AG04450 (cell line): ENCODE measurements at regions of chr6 and their contacts with region 1.

Region 1: GRCh38 chr6:83067448-83068413 is at the start of gene DOP1A:
- DNase-seq: peak; percentile 81
- H3K4me3 ChIP-seq: peak within 1 kb of the TSS; percentile 85
- H3K27ac ChIP-seq: no peak within 1 kb of the TSS
- H3K27me3 ChIP-seq: no peaks in the 10 kb centered on the region
- CTCF ChIP-seq: peak; percentile 99
- polyA plus RNA-seq, gene DOP1A: 11.3 and 14.6 TPM in 2 replicates

Region 2: GRCh38 chr6:82260997-82261686 is 806.6 kb before region 1 on chr6:
- CTCF ChIA-PET with region 1: interaction called, 93 read pairs
- POLR2A ChIA-PET with region 1: no interaction called
- DNase-seq: no peak
- H3K4me3 ChIP-seq: no peak overlapping the region
- H3K27ac ChIP-seq: no peak overlapping the region
- H3K27me3 ChIP-seq: no peaks in the 10 kb centered on the region
- CTCF ChIP-seq: no peak

Region 3: GRCh38 chr6:83086751-83087150 is 19.0 kb after region 1 on chr6:
- CTCF ChIA-PET with region 1: interaction called, 52 read pairs
- POLR2A ChIA-PET with region 1: no interaction called
- DNase-seq: no peak
- H3K4me3 ChIP-seq: no peak overlapping the region
- H3K27ac ChIP-seq: no peak overlapping the region
- H3K27me3 ChIP-seq: no peaks in the 10 kb centered on the region
- CTCF ChIP-seq: no peak

Region 4: DNA sequence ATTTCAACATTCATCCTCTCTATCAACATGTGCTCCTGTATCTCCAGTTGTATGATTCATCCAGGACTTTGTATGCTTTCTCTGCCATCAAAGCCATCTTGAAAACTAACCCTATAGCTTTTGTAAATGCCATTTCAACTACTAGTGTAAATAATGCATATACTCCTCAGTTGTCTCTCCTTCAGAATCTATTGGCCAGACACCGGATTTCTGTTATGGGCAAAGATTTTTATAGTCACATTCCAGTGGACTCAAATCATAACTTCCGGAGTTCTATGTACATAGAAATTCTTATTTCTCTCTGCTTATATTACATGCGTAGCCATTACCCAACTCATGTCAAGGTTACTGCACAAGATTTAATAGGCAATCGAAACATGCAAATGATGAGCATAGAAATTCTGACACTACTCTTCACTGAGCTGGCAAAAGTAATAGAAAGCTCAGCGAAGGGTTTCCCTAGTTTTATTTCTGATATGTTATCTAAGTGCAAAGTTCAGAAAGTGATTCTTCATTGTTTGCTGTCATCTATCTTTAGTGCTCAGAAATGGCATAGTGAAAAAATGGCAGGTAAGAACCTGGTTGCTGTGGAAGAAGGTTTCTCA is 70.5 kb after region 1 on chr6:
- CTCF ChIA-PET with region 1: interaction called, 21 read pairs
- POLR2A ChIA-PET with region 1: no interaction called
- DNase-seq: no peak
- H3K4me3 ChIP-seq: no peak overlapping the region
- H3K27ac ChIP-seq: no peak overlapping the region
- H3K27me3 ChIP-seq: no peaks in the 10 kb centered on the region
- CTCF ChIP-seq: no peak

Region 5: GRCh38 chr6:83192871-83193746 is 125.4 kb after region 1 on chr6 and contains the starts of genes PGM3 and RWDD2A:
- CTCF ChIA-PET with region 1: interaction called, 65 read pairs
- POLR2A ChIA-PET with region 1: no interaction called
- DNase-seq: peak; percentile 58
- H3K4me3 ChIP-seq: peak within 1 kb of the TSS; percentile 94
- H3K27ac ChIP-seq: peak within 1 kb of the TSS; percentile 82
- H3K27me3 ChIP-seq: no peaks in the 10 kb centered on the region
- CTCF ChIP-seq: no peak
- polyA plus RNA-seq, gene PGM3: 116 and 155 TPM in 2 replicates
- polyA plus RNA-seq, gene RWDD2A: 6.5 and 8.3 TPM in 2 replicates

Region 6: GRCh38 chr6:83365931-83366330 is 298.2 kb after region 1 on chr6:
- CTCF ChIA-PET with region 1: interaction called, 10 read pairs
- POLR2A ChIA-PET with region 1: no interaction called
- DNase-seq: no peak
- H3K4me3 ChIP-seq: no peak overlapping the region
- H3K27ac ChIP-seq: no peak overlapping the region
- H3K27me3 ChIP-seq: no peaks in the 10 kb centered on the region
- CTCF ChIP-seq: no peak

Region 7: GRCh38 chr6:83536034-83536646 is 468.4 kb after region 1 on chr6:
- CTCF ChIA-PET with region 1: interaction called, 15 read pairs
- POLR2A ChIA-PET with region 1: no interaction called
- DNase-seq: no peak
- H3K4me3 ChIP-seq: no peak overlapping the region
- H3K27ac ChIP-seq: no peak overlapping the region
- H3K27me3 ChIP-seq: peaks cover 2% of the 10 kb centered on the region
- CTCF ChIP-seq: peak; percentile 86